Psoas muscle (tissue), 8 donors: ENCODE measurements at regions of chr9 and their contacts with region 1.

Region 1: GRCh38 chr9:89281106-89281505 is 29.9 kb upstream of the CKS2 start:
- DNase-seq: no peak
- ATAC-seq: no peak
- H3K4me3 ChIP-seq: no peak overlapping the region
- H3K27ac ChIP-seq: no peak overlapping the region
- H3K4me1 ChIP-seq: no peaks in the 10 kb centered on the region
- H3K27me3 ChIP-seq: no peaks in the 10 kb centered on the region
- CTCF ChIP-seq: no peak

Region 2: GRCh38 chr9:88583901-88584596 is 697.1 kb before region 1 on chr9:
- intact Hi-C with region 1: loop called in 1 of 2 experiments (anchors 10 kb)
- DNase-seq: no peak
- ATAC-seq: no peak
- H3K4me3 ChIP-seq: no peak overlapping the region
- H3K27ac ChIP-seq: no peak overlapping the region
- H3K4me1 ChIP-seq: no peaks in the 10 kb centered on the region
- H3K27me3 ChIP-seq: no peaks in the 10 kb centered on the region
- CTCF ChIP-seq: no peak

Region 3: GRCh38 chr9:89225991-89226471 is 55.1 kb before region 1 on chr9:
- intact Hi-C with region 1: no loop called
- DNase-seq: no peak
- ATAC-seq: no peak
- H3K4me3 ChIP-seq: no peak overlapping the region
- H3K27ac ChIP-seq: no peak overlapping the region
- H3K4me1 ChIP-seq: no peaks in the 10 kb centered on the region
- H3K27me3 ChIP-seq: no peaks in the 10 kb centered on the region
- CTCF ChIP-seq: no peak